ENCODE measurements at regions of chr2 and their contacts with region 1.

Region 1: DNA sequence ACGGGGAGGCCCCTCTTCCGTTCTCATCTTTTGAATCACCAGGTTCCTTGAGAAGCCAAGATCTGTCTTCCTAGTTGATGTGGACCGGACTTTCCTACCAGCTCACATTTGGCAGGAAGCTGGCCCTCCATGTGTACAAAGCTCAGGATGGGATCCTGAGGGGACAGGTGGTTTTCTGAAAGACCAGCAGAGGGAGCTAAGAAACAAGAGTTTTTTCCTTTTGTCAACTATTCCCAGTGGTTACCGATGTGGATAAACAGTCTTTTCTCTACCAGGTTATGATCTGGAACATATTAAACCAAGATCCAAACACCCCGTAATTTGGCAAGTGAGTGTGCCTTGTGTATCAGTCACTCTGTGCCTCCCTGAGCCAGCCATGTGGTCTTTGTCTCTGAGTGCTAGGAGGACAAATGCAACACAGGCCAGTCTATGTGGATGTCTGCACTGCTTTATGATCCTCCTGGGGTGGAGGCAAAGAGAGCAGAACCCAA is 25.1 kb upstream of the ARHGAP25 start:
- DNase-seq: peak; percentile 39
- ATAC-seq: peak; percentile 84
- H3K4me3 Mint-ChIP-seq: no peak overlapping the region
- H3K27ac Mint-ChIP-seq: peak overlapping the region; percentile 74
- H3K4me1 Mint-ChIP-seq: peaks cover 33% of the 10 kb centered on the region
- H3K27me3 Mint-ChIP-seq: peaks cover 9% of the 10 kb centered on the region

Region 2: GRCh38 chr2:68302281-68302875 is 407.1 kb before region 1 on chr2:
- CTCF ChIA-PET with region 1: no interaction called
- POLR2A ChIA-PET with region 1: no interaction called
- DNase-seq: no peak
- ATAC-seq: no peak
- H3K4me3 Mint-ChIP-seq: no peak overlapping the region
- H3K27ac Mint-ChIP-seq: no peak overlapping the region
- H3K4me1 Mint-ChIP-seq: no peaks in the 10 kb centered on the region
- H3K27me3 Mint-ChIP-seq: peaks cover 7% of the 10 kb centered on the region

Region 3: GRCh38 chr2:68594674-68595492 is 114.6 kb before region 1 on chr2:
- CTCF ChIA-PET with region 1: interaction called, 16 read pairs
- POLR2A ChIA-PET with region 1: no interaction called
- DNase-seq: peak; percentile 71
- ATAC-seq: no peak
- H3K4me3 Mint-ChIP-seq: peak overlapping the region; percentile 3
- H3K27ac Mint-ChIP-seq: peak overlapping the region; percentile 4
- H3K4me1 Mint-ChIP-seq: peaks cover 13% of the 10 kb centered on the region
- H3K27me3 Mint-ChIP-seq: peaks cover 12% of the 10 kb centered on the region

Region 4: DNA sequence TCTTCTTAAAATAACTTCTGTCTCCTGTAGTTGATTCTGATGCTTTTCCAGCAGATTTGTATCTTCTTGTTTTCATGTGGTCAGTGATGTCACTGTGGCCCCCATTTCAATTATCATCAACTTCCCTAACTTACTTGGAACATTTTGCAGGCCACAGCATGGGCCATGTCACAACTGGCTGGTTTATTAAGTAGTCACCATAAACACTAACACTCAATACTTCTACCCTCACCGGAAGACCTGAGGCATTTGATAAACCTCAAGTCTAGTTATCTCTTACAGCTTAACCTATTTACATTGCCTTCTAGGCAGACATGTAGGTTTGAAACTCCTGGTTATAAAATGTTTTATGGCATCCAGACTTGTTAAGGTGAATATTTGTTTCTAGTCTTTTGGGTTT is 103.5 kb before region 1 on chr2:
- CTCF ChIA-PET with region 1: no interaction called
- POLR2A ChIA-PET with region 1: no interaction called
- DNase-seq: no peak
- ATAC-seq: no peak
- H3K4me3 Mint-ChIP-seq: no peak overlapping the region
- H3K27ac Mint-ChIP-seq: no peak overlapping the region
- H3K4me1 Mint-ChIP-seq: no peaks in the 10 kb centered on the region
- H3K27me3 Mint-ChIP-seq: peaks cover 7% of the 10 kb centered on the region

Region 5: GRCh38 chr2:68696554-68696953 is 12.9 kb before region 1 on chr2:
- CTCF ChIA-PET with region 1: interaction called, 18 read pairs
- POLR2A ChIA-PET with region 1: no interaction called
- DNase-seq: no peak
- ATAC-seq: no peak
- H3K4me3 Mint-ChIP-seq: no peak overlapping the region
- H3K27ac Mint-ChIP-seq: no peak overlapping the region
- H3K4me1 Mint-ChIP-seq: no peaks in the 10 kb centered on the region
- H3K27me3 Mint-ChIP-seq: peaks cover 8% of the 10 kb centered on the region

Region 6: GRCh38 chr2:68727683-68728375 is 18.4 kb after region 1 on chr2:
- CTCF ChIA-PET with region 1: interaction called, 36 read pairs
- POLR2A ChIA-PET with region 1: no interaction called
- DNase-seq: no peak
- ATAC-seq: no peak
- H3K4me3 Mint-ChIP-seq: peak overlapping the region; percentile 32
- H3K27ac Mint-ChIP-seq: peak overlapping the region; percentile 79
- H3K4me1 Mint-ChIP-seq: peaks cover 68% of the 10 kb centered on the region
- H3K27me3 Mint-ChIP-seq: no peaks in the 10 kb centered on the region

Region 7: DNA sequence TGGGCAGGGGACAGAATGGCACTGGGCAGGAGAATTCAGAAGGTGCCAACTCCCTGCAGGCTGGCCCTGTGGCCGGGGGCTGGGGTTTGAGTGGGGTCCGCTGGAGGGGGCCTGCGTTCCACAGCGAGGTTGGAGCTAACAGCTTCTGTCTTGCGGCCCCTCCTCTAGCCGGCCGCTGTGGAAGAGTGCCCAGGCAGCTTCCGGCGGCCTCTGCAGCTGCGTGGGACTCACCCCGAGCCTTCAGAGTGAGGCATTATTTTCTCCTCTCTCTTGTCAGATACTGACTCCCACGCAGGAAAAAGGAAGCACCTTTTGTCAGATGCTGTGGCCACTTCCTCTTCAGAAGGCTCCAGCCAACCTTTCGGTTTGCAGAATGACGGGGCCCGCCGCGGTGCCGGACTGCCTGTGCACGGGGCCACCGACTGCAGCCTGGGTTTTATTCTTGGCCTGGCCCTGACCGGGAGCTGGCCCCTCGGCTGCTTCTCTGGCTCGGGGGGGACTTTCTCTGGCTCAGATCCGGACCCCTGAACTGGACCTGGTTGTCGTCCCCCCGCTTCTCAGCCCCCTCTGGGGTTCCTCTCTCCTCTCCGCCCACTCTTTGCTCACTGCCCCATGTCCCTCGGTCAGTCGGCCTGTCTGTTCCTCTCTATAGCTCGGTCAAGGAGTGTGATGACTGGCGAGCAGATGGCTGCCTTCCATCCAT is 65.3 kb after region 1 on chr2:
- CTCF ChIA-PET with region 1: interaction called, 18 read pairs
- POLR2A ChIA-PET with region 1: no interaction called
- DNase-seq: peak; percentile 77
- ATAC-seq: peak; percentile 84
- H3K4me3 Mint-ChIP-seq: peak overlapping the region; percentile 81
- H3K27ac Mint-ChIP-seq: peak overlapping the region; percentile 97
- H3K4me1 Mint-ChIP-seq: peaks cover 86% of the 10 kb centered on the region
- H3K27me3 Mint-ChIP-seq: no peaks in the 10 kb centered on the region

Region 8: GRCh38 chr2:68837164-68837860 is 127.8 kb after region 1 on chr2:
- CTCF ChIA-PET with region 1: interaction called, 14 read pairs
- POLR2A ChIA-PET with region 1: no interaction called
- DNase-seq: peak; percentile 80
- ATAC-seq: peak; percentile 82
- H3K4me3 Mint-ChIP-seq: no peak overlapping the region
- H3K27ac Mint-ChIP-seq: no peak overlapping the region
- H3K4me1 Mint-ChIP-seq: peaks cover 44% of the 10 kb centered on the region
- H3K27me3 Mint-ChIP-seq: no peaks in the 10 kb centered on the region

Region 9: GRCh38 chr2:68909793-68910674 is 200.6 kb after region 1 on chr2:
- CTCF ChIA-PET with region 1: interaction called, 55 read pairs
- POLR2A ChIA-PET with region 1: no interaction called
- DNase-seq: peak; percentile 84
- ATAC-seq: no peak
- H3K4me3 Mint-ChIP-seq: no peak overlapping the region
- H3K27ac Mint-ChIP-seq: peak overlapping the region; percentile 5
- H3K4me1 Mint-ChIP-seq: peaks cover 37% of the 10 kb centered on the region
- H3K27me3 Mint-ChIP-seq: no peaks in the 10 kb centered on the region